Activated CD4-positive, alpha-beta T cell treated with anti-CD3 and anti-CD28 coated beads for 36 hours (primary cell): ENCODE measurements at regions of chr12 and their contacts with region 1.

Region 1: GRCh38 chr12:105053116-105053572 is 31.1 kb downstream of the ALDH1L2 start:
- DNase-seq: peak; percentile 85
- ATAC-seq: peak; percentile 85
- H3K4me3 Mint-ChIP-seq: no peak overlapping the region
- H3K27ac Mint-ChIP-seq: no peak overlapping the region
- H3K4me1 Mint-ChIP-seq: peaks cover 4% of the 10 kb centered on the region
- H3K27me3 Mint-ChIP-seq: peaks cover 4% of the 10 kb centered on the region

Region 2: GRCh38 chr12:104740668-104741067 is 312.5 kb before region 1 on chr12:
- CTCF ChIA-PET with region 1: interaction called, 3 read pairs
- POLR2A ChIA-PET with region 1: no interaction called
- intact Hi-C with region 1: loop called in 1 of 2 experiments (anchors 10 kb)
- DNase-seq: peak; percentile 37
- ATAC-seq: peak; percentile 74
- H3K4me3 Mint-ChIP-seq: peak overlapping the region; percentile 51
- H3K27ac Mint-ChIP-seq: peak overlapping the region; percentile 69
- H3K4me1 Mint-ChIP-seq: peaks cover 58% of the 10 kb centered on the region
- H3K27me3 Mint-ChIP-seq: no peaks in the 10 kb centered on the region

Region 3: GRCh38 chr12:104877123-104877705 is 175.9 kb before region 1 on chr12:
- CTCF ChIA-PET with region 1: interaction called, 4 read pairs
- POLR2A ChIA-PET with region 1: no interaction called
- intact Hi-C with region 1: loop called (anchors 1 to 2 kb)
- DNase-seq: peak; percentile 46
- ATAC-seq: peak; percentile 66
- H3K4me3 Mint-ChIP-seq: no peak overlapping the region
- H3K27ac Mint-ChIP-seq: no peak overlapping the region
- H3K4me1 Mint-ChIP-seq: no peaks in the 10 kb centered on the region
- H3K27me3 Mint-ChIP-seq: no peaks in the 10 kb centered on the region

Region 4: GRCh38 chr12:104986022-104986941 is 66.9 kb before region 1 on chr12 and contains the start of gene NOPCHAP1:
- CTCF ChIA-PET with region 1: no interaction called
- POLR2A ChIA-PET with region 1: no interaction called
- intact Hi-C with region 1: loop called in 1 of 2 experiments (anchors 5 kb)
- DNase-seq: peak; percentile 91
- ATAC-seq: peak; percentile 98
- H3K4me3 Mint-ChIP-seq: peak within 1 kb of the TSS; percentile 78
- H3K27ac Mint-ChIP-seq: peak within 1 kb of the TSS; percentile 40
- H3K4me1 Mint-ChIP-seq: peaks cover 48% of the 10 kb centered on the region
- H3K27me3 Mint-ChIP-seq: peaks cover 11% of the 10 kb centered on the region
- total RNA-seq, gene NOPCHAP1: 31.1 to 35.2 TPM